ENCODE measurements at regions of chr11 and their contacts with region 1.

Region 1: GRCh38 chr11:9565822-9566560 is 7.5 kb upstream of the WEE1 start:
- DNase-seq: peak; percentile 94
- H3K4me3 ChIP-seq: no peak overlapping the region
- H3K27ac ChIP-seq: peak overlapping the region; percentile 90 to 97 (median 92)
- H3K4me1 ChIP-seq: peaks cover 47 to 60% (median 51%) of the 10 kb centered on the region in 4 donors
- H3K27me3 ChIP-seq: no peaks in the 10 kb centered on the region
- CTCF ChIP-seq: no peak
- EP300 ChIP-seq: no peak
- POLR2A ChIP-seq: no peak

Region 2: GRCh38 chr11:9534791-9535781 is 30.9 kb before region 1 on chr11:
- intact Hi-C with region 1: loop called (anchors 5 kb)
- DNase-seq: peak; percentile 96
- H3K4me3 ChIP-seq: no peak overlapping the region
- H3K27ac ChIP-seq: peak overlapping the region; percentile 66 to 75 (median 74)
- H3K4me1 ChIP-seq: peaks cover 6 to 32% (median 28%) of the 10 kb centered on the region in 4 donors
- H3K27me3 ChIP-seq: no peaks in the 10 kb centered on the region
- CTCF ChIP-seq: peak; percentile 71 to 81 (median 77)
- EP300 ChIP-seq: no peak
- POLR2A ChIP-seq: no peak

Measured in esophagus muscularis mucosa (tissue), 4 donors.